MCF 10A (cell line): ENCODE measurements at regions of chr22 and their contacts with region 1.

Region 1: GRCh38 chr22:31661851-31662656 is at the start of gene PISD:
- DNase-seq: peak; percentile 98
- H3K4me3 Mint-ChIP-seq: peak within 1 kb of the TSS; percentile 100
- H3K27ac Mint-ChIP-seq: peak within 1 kb of the TSS; percentile 100
- H3K4me1 Mint-ChIP-seq: peaks cover 19% of the 10 kb centered on the region
- H3K27me3 Mint-ChIP-seq: no peaks in the 10 kb centered on the region
- CTCF ChIP-seq: no peak
- total RNA-seq, gene PISD: 38.3 and 48.2 TPM in 2 replicates

Region 2: DNA sequence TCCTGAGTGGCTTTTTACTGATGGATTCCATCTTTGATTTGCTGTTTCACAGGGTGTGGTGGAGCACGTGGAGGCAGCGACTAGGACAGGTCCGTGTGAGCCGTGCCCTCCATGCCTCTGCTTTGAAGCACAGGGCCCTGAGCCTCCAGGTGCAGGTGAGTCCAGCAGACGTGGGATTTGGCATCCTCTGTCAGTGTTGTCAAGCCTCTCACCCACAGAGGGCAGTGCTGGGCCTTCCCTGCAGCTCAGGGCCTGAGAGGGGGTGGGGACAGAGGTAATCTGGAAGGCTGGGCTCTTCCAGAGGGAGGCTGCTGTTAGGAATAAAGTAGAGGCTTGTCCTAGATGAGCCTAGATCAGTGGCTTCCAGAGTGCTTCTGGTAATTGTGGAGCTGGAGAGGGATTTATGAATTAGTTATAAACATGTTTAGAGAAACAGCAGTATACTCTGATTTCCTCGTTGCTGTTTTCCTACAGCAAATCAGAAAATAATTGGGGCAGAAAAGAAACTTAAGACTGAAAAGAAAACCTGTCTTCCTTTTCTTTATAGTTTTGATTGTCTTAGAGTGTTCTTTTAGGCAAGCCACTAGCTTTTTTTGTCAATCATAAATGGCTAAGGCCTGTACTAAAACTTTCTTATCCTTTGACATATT is 100.7 kb before region 1 on chr22:
- CTCF ChIA-PET with region 1: interaction called, 4 read pairs
- POLR2A ChIA-PET with region 1: interaction called, 10 read pairs
- intact Hi-C with region 1: no loop called
- DNase-seq: peak; percentile 84
- H3K4me3 Mint-ChIP-seq: no peak overlapping the region
- H3K27ac Mint-ChIP-seq: peak overlapping the region; percentile 27
- H3K4me1 Mint-ChIP-seq: peaks cover 5% of the 10 kb centered on the region
- H3K27me3 Mint-ChIP-seq: no peaks in the 10 kb centered on the region
- CTCF ChIP-seq: peak; percentile 73

Region 3: DNA sequence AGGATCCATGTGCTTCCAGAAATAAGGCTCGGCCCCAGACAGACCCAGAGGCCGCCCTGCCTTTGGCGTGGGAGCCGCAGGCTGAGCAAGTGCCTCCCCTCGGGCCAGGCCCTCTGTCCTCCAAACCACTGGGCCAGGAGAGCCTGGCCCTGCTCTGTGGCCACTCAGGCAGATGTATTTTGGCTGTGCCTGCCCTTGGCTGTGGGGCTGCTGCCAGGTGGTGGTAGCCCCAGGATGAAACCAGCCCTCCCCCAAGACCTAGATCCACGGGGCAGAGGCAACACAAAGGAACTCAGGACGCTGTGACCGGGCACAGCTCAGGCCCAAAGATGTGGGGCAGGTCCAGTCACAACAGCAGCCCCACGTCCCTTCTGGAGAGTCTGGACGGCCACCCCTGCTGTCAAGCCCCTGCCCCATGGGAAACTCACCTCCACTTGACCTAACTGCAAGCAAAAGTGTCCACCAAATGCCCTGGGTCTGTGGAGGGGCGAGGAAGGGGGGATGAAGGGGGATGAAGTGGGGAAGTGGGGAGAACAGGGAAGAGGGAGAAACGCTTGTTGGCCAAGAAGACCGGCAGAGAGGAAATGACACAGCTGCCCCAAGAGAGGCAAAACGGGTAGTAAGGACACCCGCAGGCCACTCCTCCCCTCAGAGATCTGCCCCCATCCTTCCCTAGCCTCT is 24.0 kb before region 1 on chr22:
- CTCF ChIA-PET with region 1: interaction called, 5 read pairs
- POLR2A ChIA-PET with region 1: interaction called, 32 read pairs
- intact Hi-C with region 1: no loop called
- DNase-seq: no peak
- H3K4me3 Mint-ChIP-seq: no peak overlapping the region
- H3K27ac Mint-ChIP-seq: peak overlapping the region; percentile 51
- H3K4me1 Mint-ChIP-seq: peaks cover 22% of the 10 kb centered on the region
- H3K27me3 Mint-ChIP-seq: no peaks in the 10 kb centered on the region
- CTCF ChIP-seq: no peak

Region 4: GRCh38 chr22:31676700-31677099 is 14.6 kb after region 1 on chr22:
- CTCF ChIA-PET with region 1: interaction called, 8 read pairs
- POLR2A ChIA-PET with region 1: interaction called, 81 read pairs
- intact Hi-C with region 1: no loop called
- DNase-seq: peak; percentile 96
- H3K4me3 Mint-ChIP-seq: peak overlapping the region; percentile 86
- H3K27ac Mint-ChIP-seq: peak overlapping the region; percentile 97
- H3K4me1 Mint-ChIP-seq: peaks cover 18% of the 10 kb centered on the region
- H3K27me3 Mint-ChIP-seq: no peaks in the 10 kb centered on the region
- CTCF ChIP-seq: no peak

Region 5: GRCh38 chr22:31872209-31872608 is 210.2 kb after region 1 on chr22:
- CTCF ChIA-PET with region 1: no interaction called
- POLR2A ChIA-PET with region 1: no interaction called
- intact Hi-C with region 1: loop called (anchors 5 kb)
- DNase-seq: peak; percentile 13
- H3K4me3 Mint-ChIP-seq: no peak overlapping the region
- H3K27ac Mint-ChIP-seq: no peak overlapping the region
- H3K4me1 Mint-ChIP-seq: peaks cover 16% of the 10 kb centered on the region
- H3K27me3 Mint-ChIP-seq: no peaks in the 10 kb centered on the region
- CTCF ChIP-seq: no peak

Region 6: DNA sequence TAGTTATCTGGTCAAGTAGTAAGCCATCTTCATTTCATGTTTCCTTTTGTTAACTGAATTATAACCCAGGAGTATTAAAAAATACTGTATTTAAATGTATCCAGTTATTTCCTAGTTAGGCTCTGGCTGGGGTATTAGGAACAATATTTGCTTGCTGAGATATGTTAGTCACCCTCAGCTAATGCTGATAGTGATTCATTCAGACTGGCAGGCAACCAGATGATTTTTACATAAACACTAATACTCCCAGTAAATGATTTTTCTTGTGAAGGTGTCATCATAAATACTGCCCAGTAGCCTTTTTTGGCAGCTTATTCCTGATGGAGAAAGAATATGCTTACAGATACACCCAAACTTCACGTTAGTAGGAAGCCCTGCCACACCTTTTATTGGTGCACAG is 290.4 kb after region 1 on chr22:
- CTCF ChIA-PET with region 1: interaction called, 9 read pairs
- POLR2A ChIA-PET with region 1: interaction called, 31 read pairs
- intact Hi-C with region 1: loop called (anchors 1 kb)
- DNase-seq: peak; percentile 86
- H3K4me3 Mint-ChIP-seq: no peak overlapping the region
- H3K27ac Mint-ChIP-seq: peak overlapping the region; percentile 97
- H3K4me1 Mint-ChIP-seq: peaks cover 49% of the 10 kb centered on the region
- H3K27me3 Mint-ChIP-seq: no peaks in the 10 kb centered on the region
- CTCF ChIP-seq: no peak